ENCODE measurements at regions of chr1 and their contacts with region 1.

Region 1: GRCh38 chr1:113677250-113678158 is 81.8 kb downstream of the PHTF1 start:
- DNase-seq: no peak
- H3K4me3 Mint-ChIP-seq: no peak overlapping the region
- H3K27ac Mint-ChIP-seq: no peak overlapping the region
- H3K4me1 Mint-ChIP-seq: peaks cover 15% of the 10 kb centered on the region
- H3K27me3 Mint-ChIP-seq: peaks cover 2% of the 10 kb centered on the region

Region 2: GRCh38 chr1:113140588-113141446 is 536.7 kb before region 1 on chr1:
- intact Hi-C with region 1: loop called (anchors 1 kb)
- DNase-seq: peak; percentile 21
- H3K4me3 Mint-ChIP-seq: no peak overlapping the region
- H3K27ac Mint-ChIP-seq: no peak overlapping the region
- H3K4me1 Mint-ChIP-seq: peaks cover 15% of the 10 kb centered on the region
- H3K27me3 Mint-ChIP-seq: no peaks in the 10 kb centered on the region

Measured in activated T-helper 2 cell treated with anti-CD3 and anti-CD28 coated beads, Interferon-gamma antibody, Interleukin-2, Interleukin-4, amounts not matched to agents 10 μg/mL and 5 μg/mL and 100 μg/mL, durations not matched to agents 14 hours and 24 hours and 36 hours (primary cell).